Kidney (tissue), 22 donors: ENCODE measurements at regions of chr4 and their contacts with region 1.

Region 1: GRCh38 chr4:155367608-155368007 is 9.2 kb downstream of the MAP9 start:
- DNase-seq: no peak
- H3K4me3 ChIP-seq: no peak overlapping the region
- H3K27ac ChIP-seq: no peak overlapping the region
- H3K4me1 ChIP-seq: no peaks in the 10 kb centered on the region
- H3K27me3 ChIP-seq: no peaks in the 10 kb centered on the region
- CTCF ChIP-seq: no peak

Region 2: DNA sequence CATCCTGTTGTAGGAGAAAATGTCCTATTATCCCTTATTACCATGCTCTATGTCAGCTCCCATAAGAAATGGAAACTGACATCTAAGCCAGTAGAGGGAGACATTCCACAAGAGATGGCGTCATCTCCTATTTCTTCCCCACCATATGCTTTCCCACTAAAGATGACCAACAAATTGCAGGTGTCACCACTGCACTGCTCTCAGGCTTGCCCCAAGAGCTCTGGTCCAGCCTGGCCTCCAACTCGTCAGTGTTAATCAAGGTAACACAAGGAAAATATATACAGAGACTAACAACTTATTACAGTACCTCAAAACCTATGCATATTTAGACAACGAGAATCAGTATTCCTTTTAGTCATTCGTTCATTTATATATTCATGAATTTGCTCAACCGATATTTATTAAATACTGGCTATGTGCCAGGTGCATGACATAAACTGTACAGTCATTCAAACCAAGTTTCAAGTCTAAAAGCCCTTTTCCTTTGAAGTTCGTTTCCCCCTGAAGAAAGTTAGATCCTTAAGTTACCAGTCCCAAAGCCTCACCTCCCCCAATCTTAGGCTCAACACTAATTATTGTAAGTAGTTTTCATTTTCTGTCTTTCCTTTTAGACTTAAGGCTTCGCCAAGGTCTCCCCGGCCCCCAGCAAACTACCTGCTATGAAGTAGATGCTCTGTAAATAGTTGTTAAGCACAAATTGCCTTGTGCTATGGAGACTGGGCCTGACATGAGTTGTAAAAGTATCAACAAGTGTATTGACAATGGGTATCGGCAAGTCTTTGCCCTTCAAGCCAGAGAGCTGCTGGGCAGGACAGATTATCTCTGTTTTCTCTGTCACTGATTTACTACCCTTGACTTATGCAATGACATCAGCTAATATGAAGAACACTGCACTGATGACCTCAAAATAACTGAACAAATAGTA is 807.9 kb before region 1 on chr4:
- intact Hi-C with region 1: loop called (anchors 5 kb)
- DNase-seq: peak in 3 of 5 donors; percentile 17 to 66 (median 56)
- H3K4me3 ChIP-seq: no peak overlapping the region
- H3K27ac ChIP-seq: no peak overlapping the region
- H3K4me1 ChIP-seq: no peaks in the 10 kb centered on the region
- H3K27me3 ChIP-seq: no peaks in the 10 kb centered on the region
- CTCF ChIP-seq: peak; percentile 50

Region 3: GRCh38 chr4:154691229-154691628 is 676.4 kb before region 1 on chr4:
- intact Hi-C with region 1: no loop called
- DNase-seq: no peak
- H3K4me3 ChIP-seq: no peak overlapping the region
- H3K27ac ChIP-seq: no peak overlapping the region
- H3K4me1 ChIP-seq: no peaks in the 10 kb centered on the region
- H3K27me3 ChIP-seq: no peaks in the 10 kb centered on the region
- CTCF ChIP-seq: no peak

Region 4: GRCh38 chr4:155241664-155242063 is 125.9 kb before region 1 on chr4:
- intact Hi-C with region 1: no loop called
- DNase-seq: no peak
- H3K4me3 ChIP-seq: no peak overlapping the region
- H3K27ac ChIP-seq: no peak overlapping the region
- H3K4me1 ChIP-seq: no peaks in the 10 kb centered on the region
- H3K27me3 ChIP-seq: no peaks in the 10 kb centered on the region
- CTCF ChIP-seq: no peak

Region 5: DNA sequence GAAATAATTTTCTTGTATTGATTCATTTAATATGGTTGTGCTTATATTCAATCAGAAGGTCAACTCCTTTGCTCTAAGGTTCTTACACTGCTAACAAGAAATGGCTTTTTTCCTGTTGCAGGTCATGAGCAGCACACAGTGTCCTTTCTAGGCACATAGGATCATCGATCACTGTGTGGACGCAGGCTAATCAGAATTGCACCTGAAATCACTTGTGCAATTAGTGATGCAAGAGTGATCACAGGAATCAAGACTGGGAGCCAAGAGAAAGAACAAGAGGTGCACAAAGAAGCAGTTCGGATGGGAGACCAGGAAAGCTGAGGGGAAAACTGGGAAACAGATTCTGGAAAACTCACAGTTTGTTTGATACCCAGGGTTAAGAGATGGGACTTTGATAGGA is 557.0 kb after region 1 on chr4:
- intact Hi-C with region 1: no loop called
- DNase-seq: peak in 1 of 5 donors; percentile 10
- H3K4me3 ChIP-seq: no peak overlapping the region
- H3K27ac ChIP-seq: no peak overlapping the region
- H3K4me1 ChIP-seq: no peaks in the 10 kb centered on the region
- H3K27me3 ChIP-seq: no peaks in the 10 kb centered on the region
- CTCF ChIP-seq: no peak